Activated B cell treated with CpG ODN at 0.5 μM for 24 hours (primary cell): ENCODE measurements at regions of chr12 and their contacts with region 1.

Region 1: GRCh38 chr12:9741726-9742125 is 8.8 kb upstream of the CLECL1 start:
- DNase-seq: no peak
- ATAC-seq: peak; percentile 56
- H3K4me3 Mint-ChIP-seq: peak overlapping the region; percentile 75
- H3K27ac Mint-ChIP-seq: peak overlapping the region; percentile 94
- H3K4me1 Mint-ChIP-seq: peaks cover 72% of the 10 kb centered on the region
- H3K27me3 Mint-ChIP-seq: no peaks in the 10 kb centered on the region
- CTCF ChIP-seq: no peak

Region 2: GRCh38 chr12:9634177-9634803 is 107.4 kb before region 1 on chr12:
- CTCF ChIA-PET with region 1: interaction called, 14 read pairs
- POLR2A ChIA-PET with region 1: interaction called, 10 read pairs
- intact Hi-C with region 1: loop called (anchors 1 kb)
- DNase-seq: no peak
- ATAC-seq: peak; percentile 80
- H3K4me3 Mint-ChIP-seq: peak overlapping the region; percentile 66
- H3K27ac Mint-ChIP-seq: peak overlapping the region; percentile 86
- H3K4me1 Mint-ChIP-seq: peaks cover 60% of the 10 kb centered on the region
- H3K27me3 Mint-ChIP-seq: no peaks in the 10 kb centered on the region
- CTCF ChIP-seq: peak; percentile 57

Region 3: DNA sequence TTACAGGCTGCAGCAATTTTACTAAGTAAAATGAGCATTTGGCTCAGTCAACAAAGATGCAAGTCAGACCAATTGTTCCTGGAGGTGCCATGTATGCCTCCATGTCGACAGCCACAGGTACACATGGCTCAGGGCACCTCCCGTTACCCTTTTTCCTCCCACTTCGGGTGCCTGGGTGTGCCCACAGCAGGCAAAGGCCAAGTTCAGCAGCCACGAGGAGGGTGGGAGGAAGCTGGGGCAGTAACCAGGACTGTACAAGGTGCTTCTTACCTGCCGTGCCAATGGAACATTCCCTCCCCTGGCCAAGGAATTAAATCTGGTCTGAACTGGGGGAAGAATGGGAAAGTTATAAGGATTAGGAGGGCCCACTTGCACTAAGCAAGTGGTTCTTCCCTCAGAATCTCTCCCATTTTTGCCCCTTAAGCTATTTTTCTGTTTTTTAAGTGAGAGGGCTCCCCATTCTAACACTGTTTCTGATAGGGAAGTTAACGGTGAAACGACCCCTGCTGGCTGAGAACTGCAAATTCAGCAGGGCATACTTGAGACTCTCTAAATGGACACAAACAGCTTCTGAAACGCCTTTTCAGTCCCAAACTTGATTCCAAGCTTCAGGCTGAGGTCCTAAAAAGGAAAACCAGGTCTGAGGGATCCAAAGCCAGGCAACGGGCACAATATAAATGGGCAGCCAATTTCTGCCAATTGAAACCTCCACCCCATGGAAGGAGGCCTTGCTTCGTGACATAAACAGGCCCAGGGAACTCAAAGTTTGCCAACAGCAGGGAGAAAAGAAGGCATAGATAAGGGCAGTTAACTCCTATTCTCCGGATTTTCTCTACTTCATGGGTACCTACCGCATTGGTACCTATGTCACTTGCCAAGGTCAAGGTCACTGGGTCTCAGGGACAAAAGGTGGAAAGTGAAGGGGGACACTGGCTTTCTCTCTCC is 33.6 kb before region 1 on chr12:
- CTCF ChIA-PET with region 1: interaction called, 24 read pairs
- POLR2A ChIA-PET with region 1: interaction called, 89 read pairs
- intact Hi-C with region 1: no loop called
- DNase-seq: no peak
- ATAC-seq: peak; percentile 50
- H3K4me3 Mint-ChIP-seq: peak overlapping the region; percentile 59
- H3K27ac Mint-ChIP-seq: peak overlapping the region; percentile 93
- H3K4me1 Mint-ChIP-seq: peaks cover 89% of the 10 kb centered on the region
- H3K27me3 Mint-ChIP-seq: no peaks in the 10 kb centered on the region
- CTCF ChIP-seq: peak; percentile 23

Region 4: DNA sequence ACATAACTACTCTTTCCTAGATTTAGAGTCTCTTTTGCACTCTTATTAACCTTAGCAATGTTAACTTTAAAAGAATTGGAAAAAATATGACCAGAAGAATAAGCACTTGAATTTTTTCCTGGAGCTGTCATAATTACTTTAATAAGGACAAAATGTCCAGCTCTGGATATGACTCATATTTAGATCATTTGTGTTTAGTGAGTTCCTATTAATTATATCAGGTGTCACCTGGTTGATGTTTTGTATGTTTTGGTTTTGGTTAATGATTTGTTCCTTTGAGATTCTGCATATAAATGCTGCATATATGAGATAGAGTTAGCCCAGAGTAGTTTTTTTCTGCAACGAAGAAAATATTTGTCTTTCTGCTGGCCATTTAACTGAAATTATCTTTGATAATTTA is 13.9 kb before region 1 on chr12:
- CTCF ChIA-PET with region 1: interaction called, 16 read pairs
- POLR2A ChIA-PET with region 1: interaction called, 100 read pairs
- intact Hi-C with region 1: loop called (anchors 1 kb)
- DNase-seq: no peak
- ATAC-seq: no peak
- H3K4me3 Mint-ChIP-seq: peak overlapping the region; percentile 64
- H3K27ac Mint-ChIP-seq: peak overlapping the region; percentile 77
- H3K4me1 Mint-ChIP-seq: peaks cover 85% of the 10 kb centered on the region
- H3K27me3 Mint-ChIP-seq: no peaks in the 10 kb centered on the region
- CTCF ChIP-seq: no peak

Region 5: DNA sequence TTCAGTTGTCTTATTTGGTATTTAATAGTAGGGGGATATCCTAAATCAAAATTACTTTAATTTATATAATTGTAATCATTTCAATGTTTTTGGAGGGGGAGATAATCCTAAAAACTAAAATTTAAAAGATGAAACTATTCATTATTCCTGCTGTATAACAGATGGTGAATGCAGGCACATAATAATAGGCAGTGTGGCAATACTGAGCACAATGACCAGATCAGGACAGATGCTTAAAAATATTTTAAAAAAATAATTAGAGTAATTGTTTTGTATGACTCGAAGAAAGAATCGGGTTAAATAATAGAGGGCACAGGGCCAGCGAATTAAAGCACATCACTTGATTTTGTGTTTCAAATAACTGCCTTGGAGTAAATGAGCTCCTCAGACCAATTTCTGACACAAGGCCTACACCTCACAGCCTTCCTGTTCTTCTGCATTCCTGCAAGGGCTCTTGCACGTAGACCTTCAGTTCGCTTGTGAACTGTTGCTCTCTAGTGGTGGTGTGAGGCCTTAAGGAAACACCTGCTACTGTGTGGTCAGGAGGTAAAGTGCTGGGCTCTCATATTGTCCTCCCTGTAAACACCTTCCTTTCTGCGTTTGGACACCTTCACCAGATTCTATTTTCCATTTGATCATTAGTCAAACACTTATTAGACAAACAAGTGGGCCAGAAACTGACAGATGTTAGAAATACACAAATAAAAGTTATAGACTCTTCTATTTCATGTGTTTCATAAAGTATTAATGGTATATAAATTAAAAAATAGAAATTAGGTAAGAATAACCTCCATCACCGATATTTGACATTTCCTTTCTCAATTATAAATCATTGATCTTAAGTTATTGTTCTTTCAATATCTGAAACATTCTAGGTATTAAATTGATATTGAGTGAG is 56.2 kb after region 1 on chr12:
- CTCF ChIA-PET with region 1: interaction called, 451 read pairs
- POLR2A ChIA-PET with region 1: interaction called, 10 read pairs
- intact Hi-C with region 1: no loop called
- DNase-seq: no peak
- ATAC-seq: peak; percentile 96
- H3K4me3 Mint-ChIP-seq: no peak overlapping the region
- H3K27ac Mint-ChIP-seq: no peak overlapping the region
- H3K4me1 Mint-ChIP-seq: peaks cover 34% of the 10 kb centered on the region
- H3K27me3 Mint-ChIP-seq: no peaks in the 10 kb centered on the region
- CTCF ChIP-seq: no peak